ENCODE measurements at regions of chr7 and their contacts with region 1.

Region 1: DNA sequence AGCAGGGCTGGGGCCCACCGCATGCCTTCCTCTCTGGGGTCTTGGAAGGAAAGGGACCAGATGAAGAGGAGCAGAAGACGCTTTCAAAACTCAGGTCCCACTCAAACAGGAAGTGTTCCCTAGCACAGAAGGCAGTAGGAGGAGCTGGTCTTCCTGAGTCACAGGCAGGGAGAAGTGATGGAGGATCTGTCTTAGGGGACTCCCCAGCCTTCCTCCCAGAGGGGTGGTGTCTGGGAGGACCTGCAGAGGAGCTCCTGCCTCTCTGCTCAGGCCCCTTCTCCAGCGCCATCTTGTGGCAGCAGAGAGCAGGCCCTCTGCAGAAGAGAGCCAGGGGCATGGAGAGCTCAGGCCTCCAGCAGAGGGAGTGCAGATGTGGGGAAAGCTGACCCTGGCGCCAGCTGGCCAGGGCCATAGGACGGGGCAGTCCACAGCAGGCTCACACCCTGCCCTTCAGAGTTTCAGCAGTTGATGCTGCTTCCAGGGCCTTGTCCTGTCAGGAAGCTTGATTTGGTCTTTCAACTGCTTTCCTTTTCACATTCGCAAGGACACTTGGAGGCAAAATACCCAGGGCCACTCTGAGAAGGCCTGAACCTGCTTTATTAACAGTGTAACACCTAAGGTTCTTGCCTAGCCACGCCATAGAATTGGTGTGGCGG is 62.2 kb upstream of the TARP start:
- DNase-seq: peak; percentile 74 to 91 (median 81)
- H3K4me3 ChIP-seq: peak overlapping the region; percentile 15
- H3K4me3 Mint-ChIP-seq: peak overlapping the region; percentile 88 to 97 (median 96)
- H3K27ac ChIP-seq: peak overlapping the region; percentile 80
- H3K27ac Mint-ChIP-seq: peak overlapping the region; percentile 10 to 98 (median 94)
- H3K4me1 ChIP-seq: peaks cover 14% of the 10 kb centered on the region
- H3K4me1 Mint-ChIP-seq: peaks cover 57 to 68% (median 67%) of the 10 kb centered on the region in 3 donors
- H3K27me3 ChIP-seq: no peaks in the 10 kb centered on the region
- H3K27me3 Mint-ChIP-seq: no peaks in the 10 kb centered on the region

Region 2: GRCh38 chr7:38107486-38107893 is 228.1 kb before region 1 on chr7:
- CTCF ChIA-PET with region 1: interaction called, 24 read pairs
- POLR2A ChIA-PET with region 1: interaction called, 5 read pairs
- DNase-seq: peak; percentile 39 to 77 (median 50)
- H3K4me3 ChIP-seq: no peak overlapping the region
- H3K4me3 Mint-ChIP-seq: no peak overlapping the region
- H3K27ac ChIP-seq: no peak overlapping the region
- H3K27ac Mint-ChIP-seq: no peak overlapping the region
- H3K4me1 ChIP-seq: no peaks in the 10 kb centered on the region
- H3K4me1 Mint-ChIP-seq: peaks cover 0 to 5% (median 4%) of the 10 kb centered on the region in 3 donors
- H3K27me3 ChIP-seq: peaks cover 4% of the 10 kb centered on the region
- H3K27me3 Mint-ChIP-seq: peaks cover 9 to 37% of the 10 kb centered on the region in 2 donors

Region 3: GRCh38 chr7:38147005-38147404 is 188.6 kb before region 1 on chr7:
- CTCF ChIA-PET with region 1: no interaction called
- POLR2A ChIA-PET with region 1: no interaction called
- DNase-seq: no peak
- H3K4me3 ChIP-seq: no peak overlapping the region
- H3K4me3 Mint-ChIP-seq: no peak overlapping the region
- H3K27ac ChIP-seq: no peak overlapping the region
- H3K27ac Mint-ChIP-seq: peak overlapping the region in 1 of 8 donors; percentile 17
- H3K4me1 ChIP-seq: no peaks in the 10 kb centered on the region
- H3K4me1 Mint-ChIP-seq: no peaks in the 10 kb centered on the region
- H3K27me3 ChIP-seq: no peaks in the 10 kb centered on the region
- H3K27me3 Mint-ChIP-seq: peaks cover 5 to 11% of the 10 kb centered on the region in 2 donors

Region 4: DNA sequence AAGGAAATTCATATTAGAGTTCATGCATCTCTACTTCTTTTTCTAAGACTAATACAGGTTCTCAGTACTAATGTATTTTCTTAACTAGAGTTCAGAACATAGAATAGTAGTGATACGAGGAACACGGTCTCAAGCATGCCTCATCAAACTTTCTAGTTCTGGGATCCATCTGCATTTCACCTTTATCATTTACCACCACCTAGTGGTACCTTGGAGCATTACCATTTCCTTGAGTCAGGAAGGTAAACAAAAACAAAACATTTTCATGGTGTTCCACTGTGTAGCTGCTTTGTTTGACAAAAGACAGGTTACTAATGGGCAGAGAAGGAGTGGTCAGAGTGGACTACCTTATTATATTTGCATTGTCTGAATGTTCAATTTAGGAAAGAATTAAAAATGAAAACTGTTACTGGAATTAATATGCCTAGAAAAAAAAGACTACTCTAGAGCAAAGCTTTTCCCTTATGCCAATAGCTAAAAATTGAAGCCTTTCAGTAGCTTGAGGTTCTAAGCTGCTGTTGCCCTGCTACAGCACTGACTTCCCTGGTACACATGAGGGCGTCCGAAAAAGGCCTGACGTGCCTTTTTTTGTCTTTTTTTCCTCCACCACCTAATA is 113.0 kb before region 1 on chr7:
- CTCF ChIA-PET with region 1: interaction called, 214 read pairs
- POLR2A ChIA-PET with region 1: interaction called, 4 read pairs
- DNase-seq: peak in 2 of 5 donors; percentile 58 to 60
- H3K4me3 ChIP-seq: no peak overlapping the region
- H3K4me3 Mint-ChIP-seq: peak overlapping the region in 6 of 7 donors; percentile 3 to 73 (median 21)
- H3K27ac ChIP-seq: no peak overlapping the region
- H3K27ac Mint-ChIP-seq: peak overlapping the region; percentile 54 to 98 (median 92)
- H3K4me1 ChIP-seq: peaks cover 60% of the 10 kb centered on the region
- H3K4me1 Mint-ChIP-seq: peaks cover 88 to 100% (median 99%) of the 10 kb centered on the region in 3 donors
- H3K27me3 ChIP-seq: no peaks in the 10 kb centered on the region
- H3K27me3 Mint-ChIP-seq: no peaks in the 10 kb centered on the region

Region 5: DNA sequence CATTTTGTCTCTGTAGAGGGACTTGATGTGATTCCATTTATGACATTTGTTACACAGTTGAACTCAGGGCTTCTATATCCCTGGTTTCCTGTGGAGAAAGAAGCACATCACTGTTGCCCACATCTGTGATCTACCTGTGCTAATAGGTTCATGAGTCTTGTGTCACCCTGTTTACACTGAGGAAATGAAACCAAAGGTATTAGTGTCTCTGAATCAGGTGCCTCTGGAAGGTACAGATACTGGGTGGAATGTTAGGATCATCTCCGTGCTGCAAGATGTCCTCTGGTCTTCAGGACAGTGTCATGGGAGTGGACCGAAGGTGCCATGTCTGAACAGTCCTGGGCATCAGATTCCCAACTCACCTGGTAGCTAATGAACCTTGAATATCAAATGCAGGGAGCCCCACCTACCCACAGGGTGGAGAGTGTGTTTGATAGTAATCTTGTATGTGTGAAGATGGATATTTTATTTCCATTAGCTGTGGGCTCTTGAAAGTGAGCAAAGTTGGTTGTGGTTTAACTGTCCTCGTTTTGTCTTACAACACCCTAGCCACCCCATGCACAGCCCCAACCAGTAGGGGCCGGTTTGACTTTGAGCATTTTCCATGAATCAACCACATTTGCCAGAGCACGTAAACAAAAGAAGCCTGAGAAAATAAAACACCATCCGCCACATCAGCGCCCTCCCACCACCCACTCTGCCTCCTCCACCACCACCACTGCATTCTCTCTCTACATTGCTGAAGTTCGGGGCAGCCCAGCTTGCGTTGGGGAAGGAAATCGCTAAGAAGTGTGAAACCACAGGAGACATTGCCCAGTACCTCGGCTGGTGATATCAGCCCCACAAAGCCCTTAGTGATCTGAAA is 102.9 kb before region 1 on chr7:
- CTCF ChIA-PET with region 1: interaction called, 27 read pairs
- POLR2A ChIA-PET with region 1: interaction called, 11 read pairs
- DNase-seq: peak; percentile 58 to 95 (median 66)
- H3K4me3 ChIP-seq: peak overlapping the region; percentile 27
- H3K4me3 Mint-ChIP-seq: peak overlapping the region; percentile 40 to 83 (median 77)
- H3K27ac ChIP-seq: peak overlapping the region; percentile 40
- H3K27ac Mint-ChIP-seq: peak overlapping the region; percentile 93 to 98 (median 97)
- H3K4me1 ChIP-seq: peaks cover 72% of the 10 kb centered on the region
- H3K4me1 Mint-ChIP-seq: peaks cover 91 to 100% (median 100%) of the 10 kb centered on the region in 3 donors
- H3K27me3 ChIP-seq: no peaks in the 10 kb centered on the region
- H3K27me3 Mint-ChIP-seq: no peaks in the 10 kb centered on the region

Region 6: GRCh38 chr7:38318803-38319416 is 16.7 kb before region 1 on chr7:
- CTCF ChIA-PET with region 1: interaction called, 59 read pairs
- POLR2A ChIA-PET with region 1: interaction called, 12 read pairs
- DNase-seq: no peak
- H3K4me3 ChIP-seq: peak overlapping the region; percentile 19
- H3K4me3 Mint-ChIP-seq: peak overlapping the region; percentile 90 to 99 (median 93)
- H3K27ac ChIP-seq: peak overlapping the region; percentile 45
- H3K27ac Mint-ChIP-seq: peak overlapping the region; percentile 91 to 100 (median 97)
- H3K4me1 ChIP-seq: peaks cover 26% of the 10 kb centered on the region
- H3K4me1 Mint-ChIP-seq: peaks cover 38 to 59% (median 54%) of the 10 kb centered on the region in 3 donors
- H3K27me3 ChIP-seq: no peaks in the 10 kb centered on the region
- H3K27me3 Mint-ChIP-seq: no peaks in the 10 kb centered on the region

Region 7: DNA sequence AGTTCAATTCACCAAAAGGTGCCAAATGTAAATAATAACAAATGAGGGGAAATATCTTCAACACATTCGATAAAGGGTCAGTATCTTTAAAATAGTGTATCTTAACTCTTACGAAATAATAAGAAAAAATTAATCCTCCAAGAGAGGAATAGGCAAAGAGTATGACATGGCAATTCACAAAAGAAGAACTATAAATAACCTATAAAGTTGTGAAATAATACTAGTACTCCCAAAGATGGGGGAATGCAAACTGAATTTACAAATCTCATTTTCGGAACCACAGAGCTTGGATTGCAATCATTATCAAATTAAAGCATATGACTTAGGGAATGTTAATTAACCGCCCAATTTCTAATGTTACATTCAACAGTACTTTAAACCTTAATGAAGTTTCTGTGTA is 16.0 kb after region 1 on chr7:
- CTCF ChIA-PET with region 1: interaction called, 25 read pairs
- POLR2A ChIA-PET with region 1: interaction called, 10 read pairs
- DNase-seq: no peak
- H3K4me3 ChIP-seq: no peak overlapping the region
- H3K4me3 Mint-ChIP-seq: peak overlapping the region in 6 of 7 donors; percentile 85 to 94 (median 92)
- H3K27ac ChIP-seq: no peak overlapping the region
- H3K27ac Mint-ChIP-seq: peak overlapping the region in 4 of 8 donors; percentile 35 to 78 (median 63)
- H3K4me1 ChIP-seq: no peaks in the 10 kb centered on the region
- H3K4me1 Mint-ChIP-seq: peaks cover 4 to 31% (median 28%) of the 10 kb centered on the region in 3 donors
- H3K27me3 ChIP-seq: no peaks in the 10 kb centered on the region
- H3K27me3 Mint-ChIP-seq: no peaks in the 10 kb centered on the region

Region 8: GRCh38 chr7:38360776-38361175 is 25.2 kb after region 1 on chr7:
- CTCF ChIA-PET with region 1: interaction called, 63 read pairs
- POLR2A ChIA-PET with region 1: interaction called, 3 read pairs
- DNase-seq: no peak
- H3K4me3 ChIP-seq: peak overlapping the region; percentile 26
- H3K4me3 Mint-ChIP-seq: peak overlapping the region; percentile 95 to 99 (median 97)
- H3K27ac ChIP-seq: no peak overlapping the region
- H3K27ac Mint-ChIP-seq: peak overlapping the region in 6 of 8 donors; percentile 36 to 99 (median 96)
- H3K4me1 ChIP-seq: peaks cover 19% of the 10 kb centered on the region
- H3K4me1 Mint-ChIP-seq: peaks cover 35 to 67% (median 50%) of the 10 kb centered on the region in 3 donors
- H3K27me3 ChIP-seq: no peaks in the 10 kb centered on the region
- H3K27me3 Mint-ChIP-seq: no peaks in the 10 kb centered on the region

Measured in CD8-positive, alpha-beta memory T cell (primary cell).